H1 (cell line): ENCODE measurements at regions of chr15 and their contacts with region 1.

Region 1: GRCh38 chr15:63466378-63467192 is 37.8 kb upstream of the USP3 start:
- DNase-seq: peak in 1 of 2 experiments; percentile 55
- H3K4me3 ChIP-seq: no peak overlapping the region
- H3K27ac ChIP-seq: no peak overlapping the region
- H3K4me1 ChIP-seq: no peaks in the 10 kb centered on the region
- H3K27me3 ChIP-seq: no peaks in the 10 kb centered on the region
- CTCF ChIP-seq: peak; percentile 18 to 84 (median 68)
- EP300 ChIP-seq: no peak
- POLR2A ChIP-seq: no peak
- RAD21 ChIP-seq: peak; percentile 86

Region 2: GRCh38 chr15:63436872-63437375 is 29.7 kb before region 1 on chr15:
- CTCF ChIA-PET with region 1: interaction called, 14 read pairs
- POLR2A ChIA-PET with region 1: interaction called, 3 read pairs
- DNase-seq: no peak
- H3K4me3 ChIP-seq: no peak overlapping the region; a peak in 2 of 8 replicates
- H3K27ac ChIP-seq: no peak overlapping the region
- H3K4me1 ChIP-seq: peaks cover 0 to 16% (median 11%) of the 10 kb centered on the region in 4 experiments; a peak in 5 of 7 replicates
- H3K27me3 ChIP-seq: no peaks in the 10 kb centered on the region; a peak in 1 of 7 replicates
- CTCF ChIP-seq: no peak; a peak in 1 of 4 replicates
- EP300 ChIP-seq: no peak
- POLR2A ChIP-seq: no peak
- RAD21 ChIP-seq: peak in 1 of 2 experiments; percentile 16; a peak in 1 of 4 replicates

Region 3: GRCh38 chr15:63481105-63481810 is 14.7 kb after region 1 on chr15:
- CTCF ChIA-PET with region 1: interaction called, 21 read pairs
- POLR2A ChIA-PET with region 1: interaction called, 3 read pairs
- DNase-seq: no peak
- H3K4me3 ChIP-seq: no peak overlapping the region
- H3K27ac ChIP-seq: no peak overlapping the region
- H3K4me1 ChIP-seq: peaks cover 0 to 3% (median 2%) of the 10 kb centered on the region in 4 experiments; a peak in 5 of 7 replicates
- H3K27me3 ChIP-seq: no peaks in the 10 kb centered on the region
- CTCF ChIP-seq: no peak
- EP300 ChIP-seq: no peak
- POLR2A ChIP-seq: no peak
- RAD21 ChIP-seq: no peak

Region 4: GRCh38 chr15:63487076-63487757 is 20.6 kb after region 1 on chr15:
- CTCF ChIA-PET with region 1: interaction called, 19 read pairs
- POLR2A ChIA-PET with region 1: no interaction called
- DNase-seq: peak; percentile 49 to 99
- H3K4me3 ChIP-seq: no peak overlapping the region
- H3K27ac ChIP-seq: no peak overlapping the region
- H3K4me1 ChIP-seq: peaks cover 0 to 6% (median 3%) of the 10 kb centered on the region in 4 experiments; a peak in 4 of 7 replicates
- H3K27me3 ChIP-seq: peaks cover 0 to 11% (median 4%) of the 10 kb centered on the region in 4 experiments; a peak in 4 of 7 replicates
- CTCF ChIP-seq: peak; percentile 86 to 94 (median 94)
- EP300 ChIP-seq: no peak
- POLR2A ChIP-seq: no peak
- RAD21 ChIP-seq: peak; percentile 72 to 79

Region 5: GRCh38 chr15:63610200-63610841 is 143.7 kb after region 1 on chr15:
- CTCF ChIA-PET with region 1: interaction called, 12 read pairs
- POLR2A ChIA-PET with region 1: no interaction called
- DNase-seq: peak; percentile 43 to 70
- H3K4me3 ChIP-seq: no peak overlapping the region
- H3K27ac ChIP-seq: no peak overlapping the region
- H3K4me1 ChIP-seq: no peaks in the 10 kb centered on the region
- H3K27me3 ChIP-seq: no peaks in the 10 kb centered on the region
- CTCF ChIP-seq: peak; percentile 51 to 89 (median 69)
- EP300 ChIP-seq: no peak
- POLR2A ChIP-seq: no peak
- RAD21 ChIP-seq: peak; percentile 89 to 93